ENCODE measurements at regions of chr21 and their contacts with region 1.

Region 1: DNA sequence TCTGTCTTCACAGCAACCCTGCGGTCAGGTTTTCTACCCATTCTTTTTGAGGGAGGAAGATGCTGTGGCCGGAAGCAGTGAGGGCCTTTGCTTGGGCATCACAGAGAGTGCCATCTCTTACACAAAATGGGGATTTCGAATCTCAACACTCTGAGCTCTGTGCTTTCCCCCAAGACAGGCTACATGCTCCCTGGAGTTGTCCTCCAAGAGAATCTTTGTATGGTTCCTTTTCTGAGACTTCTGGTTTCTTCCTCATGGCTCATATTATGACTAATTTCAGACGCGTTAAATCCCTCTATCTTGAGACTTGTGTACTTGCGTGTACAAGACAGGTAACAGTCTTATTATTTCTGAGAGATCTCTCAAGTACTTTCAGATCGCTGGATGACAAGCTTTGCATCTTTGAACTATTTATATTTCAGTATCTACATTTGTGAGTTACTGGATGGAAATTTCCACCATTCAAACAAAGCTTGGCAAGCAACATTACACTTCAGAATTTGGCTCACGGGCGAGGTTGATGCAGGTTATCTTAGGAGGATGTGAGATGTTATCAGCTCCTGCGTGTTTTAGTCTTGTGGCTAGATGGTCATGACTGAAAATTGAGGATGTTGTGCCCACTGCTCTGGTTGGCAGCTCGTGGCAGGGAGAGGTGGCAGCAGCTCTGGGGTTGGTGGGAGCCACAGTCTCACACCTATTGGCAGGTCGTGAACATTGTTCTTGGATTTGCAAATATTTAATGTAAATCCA is 19.4 kb downstream of the ABCG1 start:
- DNase-seq: peak; percentile 71
- H3K4me3 Mint-ChIP-seq: peak overlapping the region; percentile 50
- H3K27ac Mint-ChIP-seq: peak overlapping the region; percentile 83
- H3K4me1 Mint-ChIP-seq: peaks cover 65% of the 10 kb centered on the region
- H3K27me3 Mint-ChIP-seq: no peaks in the 10 kb centered on the region

Region 2: DNA sequence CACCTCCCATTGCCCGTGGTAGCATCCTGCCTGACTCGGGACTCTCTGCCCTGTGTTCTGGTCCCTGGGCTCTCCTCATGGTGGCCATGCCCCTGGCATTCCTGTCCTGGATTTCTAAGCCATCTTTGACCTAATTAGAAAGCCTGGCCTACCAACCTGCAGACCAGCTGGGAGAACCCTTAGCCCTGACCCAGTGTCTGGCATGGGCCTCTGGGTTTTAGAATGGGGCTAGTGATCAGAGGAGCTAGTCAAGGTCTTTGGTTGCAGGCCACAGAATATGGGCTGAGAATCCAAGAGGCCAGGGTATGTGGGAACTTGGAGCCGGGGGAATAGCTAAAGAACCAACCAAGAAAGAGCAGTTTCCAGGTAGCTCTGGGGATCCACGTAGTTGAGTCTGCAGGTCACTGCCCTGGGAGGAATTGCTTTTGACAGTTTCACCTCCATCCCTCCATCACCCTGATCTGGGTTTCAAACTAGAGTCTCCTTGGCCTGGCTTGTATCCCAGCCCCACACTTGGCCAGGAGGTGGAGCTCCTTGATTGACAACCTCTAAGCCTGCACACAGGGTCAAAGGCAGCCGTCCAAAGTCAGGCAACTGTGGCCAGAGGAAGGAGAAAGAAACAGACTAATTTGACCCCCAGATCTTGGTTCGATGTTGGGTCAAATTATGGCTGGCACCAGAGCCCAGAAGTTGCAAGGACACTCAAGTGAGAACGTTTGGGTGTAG is 74.1 kb before region 1 on chr21:
- CTCF ChIA-PET with region 1: interaction called, 14 read pairs
- POLR2A ChIA-PET with region 1: interaction called, 6 read pairs
- DNase-seq: peak; percentile 71
- H3K4me3 Mint-ChIP-seq: no peak overlapping the region
- H3K27ac Mint-ChIP-seq: no peak overlapping the region
- H3K4me1 Mint-ChIP-seq: peaks cover 16% of the 10 kb centered on the region
- H3K27me3 Mint-ChIP-seq: peaks cover 3% of the 10 kb centered on the region

Region 3: DNA sequence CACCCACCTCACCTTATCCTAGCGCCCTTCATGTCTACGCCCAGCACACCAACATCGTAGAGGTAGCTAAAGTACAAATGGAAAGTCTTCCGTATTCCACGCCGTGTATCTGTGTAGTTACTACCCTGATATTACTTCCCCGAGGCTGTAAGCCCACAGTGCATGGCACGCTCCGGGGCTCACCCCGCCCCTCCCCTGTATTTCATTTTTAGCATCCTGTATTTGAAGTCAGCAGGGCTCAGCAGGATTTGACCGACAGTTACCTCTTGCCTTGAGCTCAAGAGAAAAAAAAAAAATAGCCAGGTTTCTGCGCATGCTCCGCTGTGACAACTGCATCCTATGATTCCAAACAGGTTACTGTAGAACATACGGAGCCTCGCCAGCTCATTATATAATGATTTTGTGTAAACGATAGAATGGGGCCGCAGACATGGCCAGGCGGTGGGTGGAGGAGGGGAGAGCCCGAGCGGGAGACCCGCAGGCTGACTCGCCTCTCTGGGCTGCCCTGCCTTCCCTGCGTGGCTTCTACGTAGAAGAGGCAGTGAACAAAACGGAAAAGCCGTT is 18.1 kb before region 1 on chr21:
- CTCF ChIA-PET with region 1: interaction called, 44 read pairs
- POLR2A ChIA-PET with region 1: interaction called, 156 read pairs
- DNase-seq: peak; percentile 79
- H3K4me3 Mint-ChIP-seq: peak overlapping the region; percentile 82
- H3K27ac Mint-ChIP-seq: peak overlapping the region; percentile 84
- H3K4me1 Mint-ChIP-seq: peaks cover 15% of the 10 kb centered on the region
- H3K27me3 Mint-ChIP-seq: peaks cover 4% of the 10 kb centered on the region

Region 4: DNA sequence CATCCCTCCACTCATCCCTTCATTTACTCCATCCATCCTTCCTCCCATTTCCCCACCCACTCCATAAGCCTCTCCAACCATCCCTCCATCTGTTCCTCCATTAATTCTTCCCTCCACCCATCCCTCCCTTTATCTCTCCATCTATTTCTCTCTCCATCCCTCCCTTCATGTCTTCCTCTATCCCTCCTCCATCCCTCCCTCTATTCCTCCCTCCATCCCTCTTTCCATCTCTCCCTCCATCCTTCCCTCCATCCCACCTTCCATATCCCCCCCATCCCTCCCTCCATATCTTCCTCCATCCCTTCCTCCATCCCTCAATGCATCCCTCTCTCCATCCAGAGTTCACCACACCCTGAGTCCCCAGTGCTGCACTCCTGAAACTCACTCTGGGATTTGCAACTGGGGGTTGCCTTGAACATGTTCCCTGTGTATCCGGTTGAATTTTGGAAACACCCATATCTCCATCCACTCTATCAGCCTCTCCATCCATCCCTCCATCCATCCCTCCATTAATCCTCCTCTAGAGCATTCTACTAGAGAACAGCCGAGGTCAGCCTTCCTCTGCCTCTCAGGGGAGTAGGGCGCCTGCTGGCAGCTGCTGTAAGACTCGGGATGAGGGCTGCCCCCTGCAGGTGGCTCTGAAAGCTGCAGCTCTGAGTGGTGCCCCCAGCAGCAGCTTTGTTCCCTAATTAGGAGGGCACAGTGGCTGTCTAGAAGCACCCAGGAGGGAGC is 20.0 kb after region 1 on chr21:
- CTCF ChIA-PET with region 1: interaction called, 50 read pairs
- POLR2A ChIA-PET with region 1: interaction called, 18 read pairs
- DNase-seq: peak; percentile 83
- H3K4me3 Mint-ChIP-seq: no peak overlapping the region
- H3K27ac Mint-ChIP-seq: no peak overlapping the region
- H3K4me1 Mint-ChIP-seq: peaks cover 10% of the 10 kb centered on the region
- H3K27me3 Mint-ChIP-seq: no peaks in the 10 kb centered on the region

Region 5: DNA sequence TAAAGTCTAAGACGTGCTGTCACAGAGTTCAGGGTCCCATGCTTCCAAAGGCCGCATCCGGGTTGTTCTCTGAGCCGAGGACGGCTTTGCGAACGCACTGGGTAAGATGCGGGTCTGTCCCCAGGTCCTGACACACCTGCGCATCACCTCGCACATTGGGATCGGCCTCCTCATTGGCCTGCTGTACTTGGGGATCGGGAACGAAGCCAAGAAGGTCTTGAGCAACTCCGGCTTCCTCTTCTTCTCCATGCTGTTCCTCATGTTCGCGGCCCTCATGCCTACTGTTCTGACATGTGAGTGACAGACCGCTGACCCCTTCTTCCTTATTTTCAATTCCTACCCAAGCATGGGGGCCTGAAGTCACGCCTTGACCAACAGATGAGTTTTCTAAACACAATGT is 51.6 kb after region 1 on chr21:
- CTCF ChIA-PET with region 1: no interaction called
- POLR2A ChIA-PET with region 1: no interaction called
- DNase-seq: no peak
- H3K4me3 Mint-ChIP-seq: no peak overlapping the region
- H3K27ac Mint-ChIP-seq: no peak overlapping the region
- H3K4me1 Mint-ChIP-seq: no peaks in the 10 kb centered on the region
- H3K27me3 Mint-ChIP-seq: no peaks in the 10 kb centered on the region

Region 6: GRCh38 chr21:42424914-42425541 is 186.7 kb after region 1 on chr21:
- CTCF ChIA-PET with region 1: interaction called, 3 read pairs
- POLR2A ChIA-PET with region 1: interaction called, 25 read pairs
- DNase-seq: peak; percentile 90
- H3K4me3 Mint-ChIP-seq: peak overlapping the region; percentile 55
- H3K27ac Mint-ChIP-seq: peak overlapping the region; percentile 85
- H3K4me1 Mint-ChIP-seq: peaks cover 71% of the 10 kb centered on the region
- H3K27me3 Mint-ChIP-seq: no peaks in the 10 kb centered on the region

Measured in activated CD4-positive, alpha-beta memory T cell treated with anti-CD3 and anti-CD28 coated beads, Interleukin-2, amount 10 ng/mL, durations not matched to agents 7 days and 5 days (primary cell).